ENCODE measurements at regions of chr13 and their contacts with region 1.

Region 1: GRCh38 chr13:40137400-40137799 is 481.9 kb downstream of the COG6 start:
- DNase-seq: peak in 1 of 2 donors; percentile 54
- ATAC-seq: no peak
- H3K4me3 ChIP-seq: no peak overlapping the region
- H3K27ac ChIP-seq: no peak overlapping the region
- H3K4me1 ChIP-seq: peaks cover 0 to 1% of the 10 kb centered on the region in 2 donors
- H3K27me3 ChIP-seq: no peaks in the 10 kb centered on the region

Region 2: GRCh38 chr13:40558656-40559055 is 421.3 kb after region 1 on chr13:
- intact Hi-C with region 1: loop called in 1 of 2 experiments (anchors 5 kb)
- DNase-seq: no peak
- ATAC-seq: peak; percentile 22
- H3K4me3 ChIP-seq: no peak overlapping the region
- H3K27ac ChIP-seq: no peak overlapping the region
- H3K4me1 ChIP-seq: peaks cover 1 to 4% of the 10 kb centered on the region in 2 donors
- H3K27me3 ChIP-seq: no peaks in the 10 kb centered on the region